ENCODE measurements at regions of chr14 and their contacts with region 1.

Region 1: DNA sequence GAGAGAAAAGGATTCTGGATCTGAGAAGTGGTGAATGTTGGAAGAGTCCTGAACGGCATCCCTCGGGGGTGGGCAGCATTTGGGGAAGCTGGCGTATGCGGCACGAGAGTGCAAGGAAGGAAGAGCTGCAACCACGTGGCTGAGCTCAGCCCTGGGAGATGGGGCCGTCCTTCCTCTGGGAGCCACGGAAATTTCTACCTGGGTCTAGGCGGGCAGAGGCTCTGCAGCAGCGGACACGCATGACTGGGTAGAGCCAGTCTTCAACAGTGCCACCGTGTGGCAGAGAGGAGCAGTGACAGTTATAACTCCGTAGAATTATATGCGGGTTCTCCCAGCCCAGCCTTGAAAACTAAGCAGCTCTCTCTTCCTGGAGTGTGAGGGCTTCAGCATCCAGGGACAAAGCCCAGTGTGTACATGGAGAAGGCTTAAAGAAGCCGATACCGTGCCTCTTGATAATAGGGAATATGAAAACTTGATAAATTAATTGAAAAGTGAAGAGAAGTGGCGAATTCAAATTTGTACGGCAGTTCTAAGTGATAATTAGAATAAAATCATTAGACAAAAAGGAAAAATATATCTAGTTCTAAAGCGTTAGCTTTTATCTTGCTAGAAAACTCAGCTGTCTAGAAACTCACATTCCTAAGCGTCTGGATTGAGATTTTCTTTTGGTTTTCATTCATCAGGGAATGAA is 82.9 kb upstream of the STXBP6 start:
- DNase-seq: peak; percentile 60
- H3K4me3 Mint-ChIP-seq: no peak overlapping the region
- H3K27ac Mint-ChIP-seq: peak overlapping the region; percentile 48
- H3K4me1 Mint-ChIP-seq: peaks cover 3% of the 10 kb centered on the region
- H3K27me3 Mint-ChIP-seq: peaks cover 28% of the 10 kb centered on the region

Region 2: DNA sequence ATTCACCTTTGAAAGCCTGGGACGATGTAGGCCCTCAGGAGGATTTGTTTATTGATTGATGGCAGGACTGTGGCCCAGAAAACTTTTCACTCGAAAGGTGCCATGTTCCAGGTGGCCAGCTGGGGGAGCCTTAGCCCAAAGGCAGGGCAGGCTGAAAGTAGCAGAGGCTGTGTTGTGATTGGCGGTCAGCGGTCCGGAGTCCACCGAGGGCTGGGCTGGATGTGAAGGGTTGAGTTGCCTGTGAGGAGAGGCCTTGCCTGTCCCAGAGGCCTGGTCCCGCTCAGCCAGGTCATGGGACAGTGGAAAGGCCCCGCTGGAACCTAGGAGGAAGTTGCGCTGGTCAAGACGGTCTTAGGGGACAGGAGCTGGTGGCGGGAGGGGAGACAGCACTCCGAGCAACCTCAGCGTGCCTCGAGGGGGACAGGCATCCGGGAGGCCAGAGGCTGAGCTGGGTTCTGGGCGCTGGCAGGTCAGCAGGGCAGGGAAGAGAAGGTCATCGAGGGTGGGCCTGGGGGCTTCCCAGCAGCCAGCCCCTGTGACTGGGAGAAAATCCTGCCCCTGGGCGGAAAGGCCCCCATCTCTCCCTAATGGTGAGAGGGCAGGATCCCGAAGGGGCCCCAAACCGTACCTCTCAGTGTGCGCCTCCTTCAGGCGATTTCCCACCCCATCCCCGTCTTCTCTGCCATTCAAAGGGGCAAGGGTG is 651.1 kb before region 1 on chr14:
- CTCF ChIA-PET with region 1: interaction called, 3 read pairs
- intact Hi-C with region 1: loop called (anchors 5 kb)
- DNase-seq: peak; percentile 80
- H3K4me3 Mint-ChIP-seq: peak overlapping the region; percentile 68
- H3K27ac Mint-ChIP-seq: peak overlapping the region; percentile 22
- H3K4me1 Mint-ChIP-seq: peaks cover 23% of the 10 kb centered on the region
- H3K27me3 Mint-ChIP-seq: no peaks in the 10 kb centered on the region

Region 3: GRCh38 chr14:24734878-24735500 is 397.9 kb before region 1 on chr14:
- CTCF ChIA-PET with region 1: interaction called, 5 read pairs
- intact Hi-C with region 1: loop called (anchors 1 kb)
- DNase-seq: peak; percentile 45
- H3K4me3 Mint-ChIP-seq: no peak overlapping the region
- H3K27ac Mint-ChIP-seq: no peak overlapping the region
- H3K4me1 Mint-ChIP-seq: no peaks in the 10 kb centered on the region
- H3K27me3 Mint-ChIP-seq: peaks cover 7% of the 10 kb centered on the region

Region 4: GRCh38 chr14:24806061-24806678 is 326.7 kb before region 1 on chr14:
- CTCF ChIA-PET with region 1: interaction called, 15 read pairs
- intact Hi-C with region 1: loop called (anchors 1 kb)
- DNase-seq: peak; percentile 68
- H3K4me3 Mint-ChIP-seq: no peak overlapping the region
- H3K27ac Mint-ChIP-seq: no peak overlapping the region
- H3K4me1 Mint-ChIP-seq: no peaks in the 10 kb centered on the region
- H3K27me3 Mint-ChIP-seq: peaks cover 7% of the 10 kb centered on the region